HepG2 (cell line): ENCODE measurements at regions of chr5 and their contacts with region 1.

Region 1: GRCh38 chr5:68215208-68215897 is at the start of gene PIK3R1:
- DNase-seq: peak; percentile 84
- ATAC-seq: peak; percentile 90
- H3K4me3 ChIP-seq: peak within 1 kb of the TSS; percentile 93 to 99 (median 95)
- H3K27ac ChIP-seq: peak within 1 kb of the TSS; percentile 93
- H3K4me1 ChIP-seq: peaks cover 38% of the 10 kb centered on the region
- H3K27me3 ChIP-seq: peaks cover 0 to 2% of the 10 kb centered on the region in 2 experiments; a peak in 1 of 5 replicates
- CTCF ChIP-seq: peak; percentile 32; the same call in 1 of the 2 replicates
- EP300 ChIP-seq: no peak
- POLR2A ChIP-seq: peak; percentile 69 to 97
- RAD21 ChIP-seq: peak; percentile 45
- total RNA-seq, gene PIK3R1: 21.3 and 26.0 TPM in 2 replicates

Region 2: DNA sequence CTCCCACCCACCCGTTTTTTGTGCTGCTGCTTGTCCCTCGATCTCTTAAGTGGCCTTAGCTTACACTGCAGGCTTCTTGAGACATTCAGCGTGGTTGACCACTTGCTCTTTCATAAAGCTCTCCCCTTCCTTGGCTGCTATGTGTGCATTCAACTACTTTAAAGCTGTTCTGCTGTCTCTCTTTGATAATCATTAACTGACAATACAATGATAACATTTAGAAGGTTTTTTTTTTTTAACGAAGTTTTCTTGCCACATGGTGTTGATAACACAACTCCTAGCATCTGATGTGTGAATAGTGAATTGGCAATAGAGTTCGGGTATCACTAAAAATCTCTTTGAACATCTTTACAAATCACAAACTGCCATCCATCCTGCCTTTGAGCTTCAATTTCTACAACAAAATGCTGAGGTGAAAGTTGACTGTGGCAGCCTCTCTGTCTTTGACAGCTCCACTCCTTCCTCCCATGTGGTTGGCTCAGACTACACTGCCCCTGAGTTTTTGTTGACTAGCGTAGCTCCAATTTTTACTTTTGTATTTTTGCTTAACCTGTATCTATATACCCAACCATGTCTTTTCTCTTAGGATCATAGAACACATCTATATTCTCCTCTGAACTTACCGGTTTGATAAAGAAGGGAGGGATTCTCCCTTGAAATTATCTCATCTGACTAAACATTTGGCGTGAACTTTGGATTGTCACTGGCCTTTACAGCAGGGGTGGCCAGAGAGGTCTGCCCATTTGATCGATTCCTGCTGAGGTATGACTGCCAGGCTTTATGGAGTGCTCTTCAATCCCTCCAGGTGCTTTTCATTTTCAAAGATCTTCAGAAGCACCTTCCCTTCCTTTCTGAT is 609.4 kb before region 1 on chr5:
- CTCF ChIA-PET with region 1: no interaction called
- POLR2A ChIA-PET with region 1: interaction called, 15 read pairs
- in situ Hi-C with region 1: no loop called
- intact Hi-C with region 1: no loop called
- DNase-seq: peak; percentile 92
- ATAC-seq: peak; percentile 96
- H3K4me3 ChIP-seq: peak overlapping the region; percentile 4 to 54 (median 46); a peak in 5 of 6 replicates
- H3K27ac ChIP-seq: peak overlapping the region; percentile 93
- H3K4me1 ChIP-seq: peaks cover 50% of the 10 kb centered on the region
- H3K27me3 ChIP-seq: no peaks in the 10 kb centered on the region
- CTCF ChIP-seq: no peak
- EP300 ChIP-seq: peak in 1 of 2 experiments; percentile 78; a peak in 2 of 4 replicates
- POLR2A ChIP-seq: peak; percentile 24 to 57; a peak in 2 of 4 replicates
- RAD21 ChIP-seq: no peak

Region 3: GRCh38 chr5:68070591-68071281 is 144.6 kb before region 1 on chr5:
- CTCF ChIA-PET with region 1: no interaction called
- POLR2A ChIA-PET with region 1: no interaction called
- in situ Hi-C with region 1: no loop called
- intact Hi-C with region 1: no loop called
- DNase-seq: no peak
- ATAC-seq: no peak
- H3K4me3 ChIP-seq: no peak overlapping the region
- H3K27ac ChIP-seq: no peak overlapping the region
- H3K4me1 ChIP-seq: peaks cover 9% of the 10 kb centered on the region; the same call in 1 of the 2 replicates
- H3K27me3 ChIP-seq: no peaks in the 10 kb centered on the region; a peak in 1 of 5 replicates
- CTCF ChIP-seq: no peak
- EP300 ChIP-seq: no peak
- POLR2A ChIP-seq: no peak
- RAD21 ChIP-seq: no peak

Region 4: DNA sequence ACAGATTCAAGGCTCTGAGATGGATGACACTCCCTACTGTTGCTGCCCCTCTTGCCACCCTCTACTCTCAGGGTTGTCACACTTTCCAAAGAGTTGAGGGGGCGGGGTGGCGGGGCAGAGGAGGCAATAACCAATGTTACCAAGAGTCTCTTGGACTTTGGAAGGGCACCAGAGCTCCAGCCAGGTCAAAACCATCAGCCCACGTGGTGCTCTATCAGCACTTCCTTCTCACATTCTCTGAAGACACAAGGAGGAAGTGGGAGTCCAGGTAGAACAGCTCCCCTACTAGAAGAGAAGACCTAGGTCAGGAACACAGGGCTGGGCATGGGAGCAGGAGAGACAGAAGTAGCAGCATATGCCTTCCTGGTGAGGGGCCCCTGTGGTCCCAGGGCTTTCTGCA is 32.8 kb before region 1 on chr5:
- CTCF ChIA-PET with region 1: no interaction called
- POLR2A ChIA-PET with region 1: interaction called, 20 read pairs
- in situ Hi-C with region 1: no loop called
- intact Hi-C with region 1: no loop called
- DNase-seq: no peak
- ATAC-seq: no peak
- H3K4me3 ChIP-seq: no peak overlapping the region
- H3K27ac ChIP-seq: no peak overlapping the region
- H3K4me1 ChIP-seq: peaks cover 35% of the 10 kb centered on the region
- H3K27me3 ChIP-seq: no peaks in the 10 kb centered on the region
- CTCF ChIP-seq: no peak
- EP300 ChIP-seq: no peak
- POLR2A ChIP-seq: no peak
- RAD21 ChIP-seq: no peak

Region 5: GRCh38 chr5:68239487-68239886 is 24.1 kb after region 1 on chr5:
- CTCF ChIA-PET with region 1: no interaction called
- POLR2A ChIA-PET with region 1: interaction called, 40 read pairs
- in situ Hi-C with region 1: no loop called
- intact Hi-C with region 1: loop called (anchors 2 kb)
- DNase-seq: peak; percentile 94
- ATAC-seq: peak; percentile 100
- H3K4me3 ChIP-seq: peak overlapping the region in 2 of 3 experiments; percentile 37 to 50; a peak in 5 of 6 replicates
- H3K27ac ChIP-seq: peak overlapping the region; percentile 72
- H3K4me1 ChIP-seq: peaks cover 67% of the 10 kb centered on the region
- H3K27me3 ChIP-seq: no peaks in the 10 kb centered on the region
- CTCF ChIP-seq: 0 out of 2 replicates have a peak, but pooled peaks have one; percentile 18
- EP300 ChIP-seq: peak in 1 of 2 experiments; percentile 93; a peak in 3 of 4 replicates
- POLR2A ChIP-seq: no peak
- RAD21 ChIP-seq: no peak